Heart right ventricle (tissue), 16 donors: ENCODE measurements at regions of chr9 and their contacts with region 1.

Region 1: DNA sequence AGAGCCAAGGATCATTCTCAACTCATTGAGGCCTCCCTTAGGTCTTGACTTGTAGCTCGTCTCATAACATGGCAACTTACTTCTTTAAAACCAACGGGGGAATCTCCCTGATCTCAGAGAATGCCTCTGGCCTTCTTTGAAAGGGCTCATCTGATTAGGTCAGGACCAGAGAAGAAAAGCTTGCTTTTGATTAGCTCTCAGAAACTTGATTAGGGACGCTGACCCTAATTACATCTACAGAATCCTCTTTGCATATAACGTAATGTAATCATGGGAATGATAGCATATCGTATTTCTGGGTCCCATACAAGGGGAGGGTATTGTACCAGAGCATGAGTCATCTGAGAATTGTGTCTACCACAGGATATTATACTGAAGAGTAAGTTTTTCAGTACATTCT is 125.1 kb upstream of the SH3GL2 start:
- DNase-seq: no peak
- ATAC-seq: no peak
- H3K4me3 ChIP-seq: no peak overlapping the region
- H3K27ac ChIP-seq: no peak overlapping the region
- H3K4me1 ChIP-seq: peaks cover 0 to 3% (median 0%) of the 10 kb centered on the region in 9 donors
- H3K27me3 ChIP-seq: no peaks in the 10 kb centered on the region
- CTCF ChIP-seq: no peak

Region 2: DNA sequence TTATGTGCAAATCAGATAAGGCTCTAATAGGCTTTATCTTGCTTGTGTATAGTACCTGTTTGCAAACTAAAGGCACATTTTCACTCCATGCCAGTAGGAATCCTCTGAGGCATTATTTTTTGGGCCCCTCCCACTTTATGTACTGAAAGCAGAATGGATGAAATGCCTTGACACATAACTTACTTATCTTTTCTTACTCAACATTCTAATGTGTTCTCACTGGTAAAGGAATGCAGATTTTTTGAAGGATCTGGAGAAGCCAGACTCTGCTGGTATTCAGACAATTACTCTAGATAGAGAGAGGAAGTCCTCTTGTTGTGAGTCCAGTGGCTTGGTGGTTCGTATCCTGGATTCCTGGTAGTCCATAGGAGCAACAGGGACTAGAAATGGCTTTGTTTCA is 1564.2 kb before region 1 on chr9:
- intact Hi-C with region 1: loop called in 1 of 10 experiments (anchors 10 kb)
- DNase-seq: no peak
- ATAC-seq: no peak
- H3K4me3 ChIP-seq: no peak overlapping the region
- H3K27ac ChIP-seq: no peak overlapping the region
- H3K4me1 ChIP-seq: no peaks in the 10 kb centered on the region
- H3K27me3 ChIP-seq: no peaks in the 10 kb centered on the region
- CTCF ChIP-seq: no peak